GM13976 (cell line): ENCODE measurements at regions of chr2 and their contacts with region 1.

Region 1: GRCh38 chr2:30711646-30712085 is 95.6 kb downstream of the CAPN13 start:
- DNase-seq: peak; percentile 84
- CTCF ChIP-seq: peak; percentile 100

Region 2: GRCh38 chr2:30165050-30165520 is 546.6 kb before region 1 on chr2:
- in situ Hi-C with region 1: loop called (anchors 5 kb)
- DNase-seq: peak; percentile 77
- CTCF ChIP-seq: peak; percentile 55

Region 3: GRCh38 chr2:30208452-30208851 is 503.2 kb before region 1 on chr2:
- in situ Hi-C with region 1: loop called (anchors 10 kb)
- DNase-seq: peak; percentile 53
- CTCF ChIP-seq: peak; percentile 83

Region 4: GRCh38 chr2:31129375-31130171 is 417.9 kb after region 1 on chr2:
- in situ Hi-C with region 1: no loop called
- DNase-seq: no peak
- CTCF ChIP-seq: no peak

Region 5: GRCh38 chr2:31333527-31334183 is 622.0 kb after region 1 on chr2:
- in situ Hi-C with region 1: loop called (anchors 10 kb)
- DNase-seq: peak; percentile 75
- CTCF ChIP-seq: peak; percentile 95